ENCODE measurements at regions of chr4 and their contacts with region 1.

Region 1: GRCh38 chr4:9825049-9825448 is 43.6 kb downstream of the DRD5 start:
- DNase-seq: peak; percentile 78
- ATAC-seq: peak; percentile 98
- H3K4me3 Mint-ChIP-seq: no peak overlapping the region
- H3K27ac Mint-ChIP-seq: peak overlapping the region; percentile 44
- H3K4me1 Mint-ChIP-seq: peaks cover 18% of the 10 kb centered on the region
- H3K27me3 Mint-ChIP-seq: peaks cover 12% of the 10 kb centered on the region

Region 2: GRCh38 chr4:9691238-9692065 is 133.6 kb before region 1 on chr4:
- CTCF ChIA-PET with region 1: no interaction called
- POLR2A ChIA-PET with region 1: no interaction called
- intact Hi-C with region 1: no loop called
- DNase-seq: peak; percentile 95
- ATAC-seq: peak; percentile 100
- H3K4me3 Mint-ChIP-seq: peak overlapping the region; percentile 76
- H3K27ac Mint-ChIP-seq: peak overlapping the region; percentile 76
- H3K4me1 Mint-ChIP-seq: peaks cover 23% of the 10 kb centered on the region
- H3K27me3 Mint-ChIP-seq: no peaks in the 10 kb centered on the region

Region 3: DNA sequence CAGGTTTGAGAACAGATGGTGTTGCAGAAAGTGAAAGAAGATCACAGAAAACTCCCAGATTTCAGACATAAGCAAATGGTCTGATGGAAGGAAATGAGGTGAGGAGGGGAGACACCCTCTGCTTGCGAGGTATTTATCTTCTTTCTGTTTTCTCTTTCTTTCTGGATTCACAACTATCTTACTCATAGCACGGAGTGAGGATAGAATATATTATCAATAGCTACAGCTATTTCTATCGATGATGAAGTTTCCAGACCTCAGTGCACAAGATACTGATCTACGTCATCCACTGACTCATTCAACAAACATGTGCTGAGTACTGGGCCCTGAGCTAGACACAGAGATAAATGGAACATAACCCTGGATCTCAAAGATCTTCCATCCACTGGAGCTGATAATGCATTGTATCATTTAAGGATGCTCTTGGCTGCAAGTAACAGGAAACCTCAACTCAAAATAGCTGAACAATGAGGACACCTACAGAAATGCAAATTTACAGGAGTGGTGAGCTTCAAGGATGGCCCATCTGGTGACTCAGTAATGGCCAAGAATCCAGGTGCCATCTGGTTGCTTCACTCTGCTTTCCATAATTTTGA is 175.0 kb after region 1 on chr4:
- CTCF ChIA-PET with region 1: no interaction called
- POLR2A ChIA-PET with region 1: no interaction called
- intact Hi-C with region 1: loop called in 1 of 2 experiments (anchors 5 kb)
- DNase-seq: no peak
- ATAC-seq: peak; percentile 67
- H3K4me3 Mint-ChIP-seq: no peak overlapping the region
- H3K27ac Mint-ChIP-seq: no peak overlapping the region
- H3K4me1 Mint-ChIP-seq: peaks cover 13% of the 10 kb centered on the region
- H3K27me3 Mint-ChIP-seq: no peaks in the 10 kb centered on the region

Region 4: DNA sequence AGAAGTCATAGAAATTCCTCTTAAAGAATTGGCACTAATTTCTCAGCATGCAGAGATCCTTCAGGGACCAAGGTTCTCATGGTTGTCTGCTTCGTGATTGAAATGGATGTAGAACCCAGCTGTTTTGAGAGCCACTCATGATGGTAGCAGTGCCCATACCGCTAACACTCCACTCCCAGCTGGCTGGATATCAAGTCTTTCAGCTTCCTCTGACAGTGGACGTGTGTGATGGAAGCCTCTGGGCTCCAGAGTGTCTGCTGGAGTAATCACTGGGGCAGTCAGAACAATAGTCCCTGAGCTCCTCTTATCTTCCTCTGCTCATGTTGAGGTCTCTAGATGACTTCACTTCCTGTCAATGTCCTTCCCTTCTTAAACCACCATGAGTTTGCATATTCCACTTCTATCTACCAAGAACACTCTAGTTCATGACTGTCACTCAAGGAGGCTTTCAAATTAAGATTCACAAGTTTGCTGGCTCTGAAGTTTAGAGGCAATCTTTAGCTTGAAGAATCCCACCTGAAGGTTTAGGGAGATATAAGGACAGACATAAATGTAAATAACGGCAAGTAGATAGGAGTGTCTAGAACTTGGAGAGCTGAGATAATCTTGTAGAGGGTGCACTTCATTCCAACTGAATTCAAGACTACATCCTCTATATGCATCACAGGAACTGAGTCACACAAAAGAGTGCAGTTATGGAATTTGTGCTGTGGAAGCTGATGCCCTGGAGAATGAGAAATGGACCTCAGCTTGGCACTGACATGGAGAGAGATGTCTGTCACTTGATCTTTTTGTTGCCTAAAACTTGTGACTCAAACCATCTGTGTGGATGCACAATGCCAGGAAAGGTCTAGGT is 356.1 kb after region 1 on chr4:
- CTCF ChIA-PET with region 1: interaction called, 3 read pairs
- POLR2A ChIA-PET with region 1: no interaction called
- intact Hi-C with region 1: loop called in 1 of 2 experiments (anchors 1 kb)
- DNase-seq: peak; percentile 62
- ATAC-seq: peak; percentile 97
- H3K4me3 Mint-ChIP-seq: peak overlapping the region; percentile 26
- H3K27ac Mint-ChIP-seq: peak overlapping the region; percentile 79
- H3K4me1 Mint-ChIP-seq: peaks cover 31% of the 10 kb centered on the region
- H3K27me3 Mint-ChIP-seq: no peaks in the 10 kb centered on the region